ENCODE measurements at regions of chr5 and their contacts with region 1.

Region 1: GRCh38 chr5:141992349-141992963 is 20.4 kb downstream of the GNPDA1 start:
- DNase-seq: peak; percentile 65
- H3K4me3 ChIP-seq: no peak overlapping the region; a peak in 1 of 4 replicates
- H3K27ac ChIP-seq: no peak overlapping the region
- H3K4me1 ChIP-seq: no peaks in the 10 kb centered on the region
- H3K27me3 ChIP-seq: no peaks in the 10 kb centered on the region
- CTCF ChIP-seq: peak; percentile 90
- EP300 ChIP-seq: no peak
- RAD21 ChIP-seq: peak; percentile 75

Region 2: DNA sequence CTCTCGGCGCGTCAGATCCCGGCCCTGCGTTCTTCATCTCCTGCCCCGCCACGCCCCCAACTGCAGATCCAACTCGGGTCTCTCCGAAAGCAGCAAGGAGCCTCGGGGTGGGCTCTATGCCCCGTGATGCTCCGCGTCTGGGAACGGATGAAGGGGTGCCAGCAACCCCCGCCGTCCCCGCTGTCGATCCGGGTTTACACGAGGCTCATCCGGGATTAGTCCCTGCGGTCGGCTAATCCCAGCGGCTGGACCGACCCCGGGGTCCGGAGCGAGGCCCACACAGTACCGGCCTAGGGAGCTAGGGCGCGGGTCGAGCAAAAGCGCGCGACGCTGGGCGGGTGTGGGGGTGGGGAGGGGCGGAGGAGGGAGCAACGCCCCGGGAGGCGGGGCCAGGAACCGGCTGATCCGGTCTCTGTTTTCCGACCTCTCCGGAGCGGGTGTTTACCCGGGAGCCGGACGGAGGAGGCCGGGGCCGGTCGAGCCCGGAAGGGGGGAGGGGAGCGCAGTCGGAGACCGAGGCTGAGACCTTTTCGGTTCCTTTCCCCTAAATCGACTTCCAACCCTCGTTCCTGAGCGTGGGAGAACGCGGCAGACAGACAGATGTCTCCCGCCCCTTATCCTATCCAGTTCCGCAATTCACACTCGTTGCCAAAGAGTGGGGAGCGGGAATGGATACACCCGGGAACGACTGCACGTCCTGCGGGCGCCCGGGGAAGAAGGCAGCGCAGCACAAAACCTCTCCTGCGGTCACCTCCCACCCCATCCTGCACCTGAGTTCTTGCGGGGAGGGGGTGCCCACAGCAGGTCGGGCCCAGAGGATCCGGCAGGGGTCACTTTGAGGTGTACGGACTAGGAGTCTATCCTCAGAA is 142.8 kb before region 1 on chr5:
- CTCF ChIA-PET with region 1: no interaction called
- POLR2A ChIA-PET with region 1: no interaction called
- DNase-seq: peak; percentile 95
- H3K4me3 ChIP-seq: peak overlapping the region; percentile 74 to 82
- H3K27ac ChIP-seq: peak overlapping the region; percentile 83 to 98
- H3K4me1 ChIP-seq: peaks cover 8 to 34% of the 10 kb centered on the region in 2 experiments; a peak in 3 of 4 replicates
- H3K27me3 ChIP-seq: no peaks in the 10 kb centered on the region; the same call in 1 of the 2 replicates
- CTCF ChIP-seq: no peak
- EP300 ChIP-seq: peak in 1 of 2 experiments; percentile 14; a peak in 1 of 4 replicates
- RAD21 ChIP-seq: no peak

Region 3: GRCh38 chr5:141866149-141867120 is 126.0 kb before region 1 on chr5:
- CTCF ChIA-PET with region 1: no interaction called
- POLR2A ChIA-PET with region 1: no interaction called
- DNase-seq: no peak
- H3K4me3 ChIP-seq: no peak overlapping the region
- H3K27ac ChIP-seq: no peak overlapping the region
- H3K4me1 ChIP-seq: peaks cover 0 to 9% of the 10 kb centered on the region in 2 experiments; a peak in 1 of 4 replicates
- H3K27me3 ChIP-seq: peaks cover 40% of the 10 kb centered on the region
- CTCF ChIP-seq: no peak
- EP300 ChIP-seq: no peak
- RAD21 ChIP-seq: no peak

Region 4: DNA sequence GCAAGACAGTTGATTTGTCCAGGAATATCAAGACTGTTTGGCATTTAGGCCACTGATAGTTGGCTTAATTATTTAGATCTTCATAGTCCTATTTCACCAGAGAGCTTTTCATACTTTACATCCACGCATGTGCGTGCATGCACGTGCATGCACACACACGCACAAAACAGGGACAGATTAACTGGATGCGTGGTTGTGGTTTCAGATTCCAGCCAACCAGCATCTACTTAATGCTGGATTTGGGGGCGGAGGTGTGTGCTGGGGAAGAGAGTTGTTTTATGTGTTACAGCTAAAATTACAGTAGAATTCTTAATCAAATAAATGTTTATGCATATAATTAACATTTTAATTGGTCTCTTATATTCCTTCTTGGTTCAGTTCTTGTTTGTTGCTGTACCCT is 16.3 kb before region 1 on chr5:
- CTCF ChIA-PET with region 1: interaction called, 29 read pairs
- POLR2A ChIA-PET with region 1: no interaction called
- DNase-seq: no peak
- H3K4me3 ChIP-seq: no peak overlapping the region
- H3K27ac ChIP-seq: no peak overlapping the region
- H3K4me1 ChIP-seq: peaks cover 8 to 9% of the 10 kb centered on the region in 2 experiments; a peak in 3 of 4 replicates
- H3K27me3 ChIP-seq: no peaks in the 10 kb centered on the region
- CTCF ChIP-seq: no peak
- EP300 ChIP-seq: no peak
- RAD21 ChIP-seq: no peak

Measured in SK-N-SH (cell line).